Ascending aorta (tissue), 2 donors: ENCODE measurements at regions of chr9 and their contacts with region 1.

Region 1: DNA sequence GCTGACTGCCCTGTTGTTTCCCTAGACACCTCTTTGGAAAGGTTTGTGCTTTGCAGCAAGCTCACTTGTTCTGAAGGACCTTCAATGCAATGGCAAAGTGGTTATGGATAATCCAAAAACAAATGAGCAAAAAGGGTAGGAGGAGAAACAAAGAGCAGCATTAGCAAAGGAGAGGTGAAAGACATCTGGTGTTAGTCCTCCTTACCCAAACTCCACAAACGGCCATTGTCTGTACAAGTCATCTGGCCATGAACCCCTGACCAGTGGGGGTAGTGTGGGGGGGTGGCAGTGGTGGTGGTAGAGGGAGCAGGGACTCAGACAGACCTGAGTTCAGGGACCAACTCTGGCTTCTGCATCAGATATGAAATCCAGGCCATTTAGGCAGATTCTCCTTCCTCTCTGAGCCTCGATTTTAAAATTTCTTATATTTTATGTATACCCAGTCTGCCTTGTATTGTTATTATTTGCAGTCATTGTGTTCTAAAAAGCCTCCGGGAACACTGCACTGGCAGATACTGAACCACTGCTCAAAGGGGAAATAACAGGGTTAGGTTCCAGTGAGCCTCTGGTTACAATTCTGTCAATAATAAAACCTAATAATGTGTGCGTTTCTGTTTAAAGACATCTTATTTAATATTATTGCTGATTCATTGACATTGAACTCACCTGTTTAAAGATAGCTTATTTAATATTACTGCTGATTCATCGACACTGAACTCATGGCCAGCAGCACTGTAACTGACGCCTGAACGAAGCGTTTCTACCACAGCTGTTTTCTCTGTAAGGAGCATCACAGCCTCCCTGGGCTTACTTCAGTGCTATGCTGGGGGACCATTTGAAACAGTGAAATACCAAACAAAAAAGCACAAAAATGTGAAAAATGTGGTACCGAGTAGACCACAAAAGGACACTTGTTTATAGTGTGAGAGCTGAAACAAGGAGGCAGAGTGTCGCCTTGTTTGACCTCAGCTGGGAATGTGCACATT is 156.0 kb downstream of the SEC61B start:
- DNase-seq: no peak
- H3K4me3 ChIP-seq: no peak overlapping the region
- H3K27ac ChIP-seq: no peak overlapping the region
- H3K4me1 ChIP-seq: no peaks in the 10 kb centered on the region
- H3K27me3 ChIP-seq: no peaks in the 10 kb centered on the region
- CTCF ChIP-seq: no peak

Region 2: GRCh38 chr9:98974994-98975712 is 402.9 kb before region 1 on chr9:
- intact Hi-C with region 1: loop called (anchors 10 kb)
- DNase-seq: peak in 1 of 2 donors; percentile 92
- H3K4me3 ChIP-seq: peak overlapping the region; percentile 39 to 56
- H3K27ac ChIP-seq: peak overlapping the region; percentile 40 to 47
- H3K4me1 ChIP-seq: peaks cover 0 to 29% of the 10 kb centered on the region in 2 donors
- H3K27me3 ChIP-seq: no peaks in the 10 kb centered on the region
- CTCF ChIP-seq: peak; percentile 94 to 100 (median 99)

Region 3: GRCh38 chr9:99513441-99514112 is 135.5 kb after region 1 on chr9:
- intact Hi-C with region 1: no loop called
- DNase-seq: no peak
- H3K4me3 ChIP-seq: no peak overlapping the region
- H3K27ac ChIP-seq: no peak overlapping the region
- H3K4me1 ChIP-seq: no peaks in the 10 kb centered on the region
- H3K27me3 ChIP-seq: no peaks in the 10 kb centered on the region
- CTCF ChIP-seq: no peak